Activated CD4-positive, alpha-beta memory T cell treated with anti-CD3 and anti-CD28 coated beads, Interleukin-2, amount 10 ng/mL, durations not matched to agents 7 days and 5 days (primary cell): ENCODE measurements at regions of chr7 and their contacts with region 1.

Region 1: GRCh38 chr7:139431010-139431409 is 52.5 kb downstream of the KLRG2 start:
- DNase-seq: no peak
- H3K4me3 Mint-ChIP-seq: no peak overlapping the region
- H3K27ac Mint-ChIP-seq: no peak overlapping the region
- H3K4me1 Mint-ChIP-seq: peaks cover 4% of the 10 kb centered on the region
- H3K27me3 Mint-ChIP-seq: no peaks in the 10 kb centered on the region

Region 2: DNA sequence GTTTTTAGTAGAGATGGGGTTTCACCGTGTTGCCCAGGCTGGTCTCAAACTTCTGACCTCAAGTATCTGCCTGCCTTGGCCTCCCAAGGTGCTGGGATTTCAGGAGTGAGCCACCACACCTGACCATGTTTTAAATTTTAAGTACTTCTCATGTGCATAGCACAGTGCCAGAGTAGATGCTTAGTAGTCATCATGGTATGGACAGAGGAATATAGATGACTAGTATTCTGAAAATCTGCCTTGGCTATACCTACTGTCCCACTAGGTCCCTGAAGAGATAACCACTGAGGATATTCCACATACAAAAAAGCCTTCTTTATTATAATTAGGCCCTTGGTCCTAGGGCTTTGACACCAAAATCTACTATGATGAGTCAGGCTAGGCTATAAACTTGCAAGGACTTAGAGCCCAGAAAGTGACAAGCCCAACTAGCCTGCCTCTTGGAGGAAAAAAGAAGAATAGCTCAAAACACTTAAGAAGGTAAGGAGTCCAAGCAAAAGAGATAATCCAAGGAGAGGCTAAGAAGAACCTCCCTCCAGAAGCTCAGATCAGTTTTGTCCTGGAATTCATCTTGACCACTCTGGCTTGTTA is 37.3 kb before region 1 on chr7:
- CTCF ChIA-PET with region 1: interaction called, 17 read pairs
- POLR2A ChIA-PET with region 1: interaction called, 3 read pairs
- DNase-seq: no peak
- H3K4me3 Mint-ChIP-seq: no peak overlapping the region
- H3K27ac Mint-ChIP-seq: peak overlapping the region; percentile 74
- H3K4me1 Mint-ChIP-seq: peaks cover 38% of the 10 kb centered on the region
- H3K27me3 Mint-ChIP-seq: no peaks in the 10 kb centered on the region

Region 3: GRCh38 chr7:139416405-139416804 is 14.6 kb before region 1 on chr7:
- CTCF ChIA-PET with region 1: interaction called, 61 read pairs
- POLR2A ChIA-PET with region 1: no interaction called
- DNase-seq: no peak
- H3K4me3 Mint-ChIP-seq: no peak overlapping the region
- H3K27ac Mint-ChIP-seq: no peak overlapping the region
- H3K4me1 Mint-ChIP-seq: no peaks in the 10 kb centered on the region
- H3K27me3 Mint-ChIP-seq: no peaks in the 10 kb centered on the region

Region 4: DNA sequence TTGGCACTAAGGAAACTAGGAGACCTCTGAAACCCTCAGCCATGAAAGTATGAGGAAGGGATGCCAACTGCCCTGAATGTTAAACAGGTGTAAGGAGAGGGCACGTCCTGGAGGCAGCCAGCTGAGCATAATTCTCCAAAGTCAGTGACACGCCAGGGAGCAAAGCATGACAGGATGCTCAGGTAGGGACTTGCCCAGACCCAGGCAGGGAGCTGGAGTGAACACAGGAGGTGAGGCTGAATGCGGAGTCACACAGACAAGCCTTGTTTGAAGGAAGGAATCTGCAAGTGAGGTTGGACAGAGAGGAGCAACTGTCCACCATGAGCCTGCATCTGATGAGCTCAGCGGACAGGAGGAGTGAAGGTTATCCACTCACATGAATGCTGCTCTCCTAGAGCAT is 11.0 kb after region 1 on chr7:
- CTCF ChIA-PET with region 1: interaction called, 61 read pairs
- POLR2A ChIA-PET with region 1: no interaction called
- DNase-seq: no peak
- H3K4me3 Mint-ChIP-seq: no peak overlapping the region
- H3K27ac Mint-ChIP-seq: no peak overlapping the region
- H3K4me1 Mint-ChIP-seq: no peaks in the 10 kb centered on the region
- H3K27me3 Mint-ChIP-seq: no peaks in the 10 kb centered on the region